ENCODE measurements at regions of chr3 and their contacts with region 1.

Region 1: DNA sequence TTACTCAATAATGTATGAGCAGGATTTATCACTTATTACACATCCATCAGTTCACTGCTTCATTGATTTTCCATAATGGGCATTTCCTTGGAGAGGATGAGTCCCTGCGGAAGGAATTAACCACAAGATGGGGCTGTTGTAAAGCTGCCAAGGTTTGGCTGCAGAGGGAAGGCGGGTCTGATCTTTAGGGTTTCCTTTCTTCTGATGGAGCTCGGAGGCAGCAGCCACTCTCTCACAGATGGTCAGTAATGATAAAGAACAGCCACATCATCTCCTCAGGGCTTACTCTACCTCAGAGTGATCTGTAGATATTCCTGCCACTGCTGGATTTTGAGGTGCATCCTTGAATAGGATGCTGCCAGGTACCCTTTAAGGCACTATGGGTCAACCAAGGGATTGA is 115.2 kb downstream of the USP13 start:
- DNase-seq: no peak
- ATAC-seq: no peak

Region 2: DNA sequence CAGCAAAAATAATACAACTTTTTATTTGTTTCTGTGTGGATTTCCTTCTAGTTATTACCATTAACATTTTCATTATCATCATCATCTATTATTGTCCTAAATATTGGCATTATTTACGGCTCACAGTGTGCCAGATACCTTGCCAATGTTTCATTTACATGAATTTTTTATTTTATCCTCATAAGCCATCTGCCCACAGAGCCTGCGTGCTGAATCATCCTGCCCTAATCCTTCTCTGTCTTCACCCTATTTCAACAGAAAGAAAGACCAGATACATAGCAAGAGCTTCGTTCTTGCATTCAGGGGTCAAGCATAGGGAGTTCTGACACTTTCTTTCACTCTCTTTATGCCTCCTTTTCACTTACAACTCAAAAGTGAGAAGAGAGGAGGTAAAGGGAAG is 1149.9 kb before region 1 on chr3:
- intact Hi-C with region 1: no loop called
- DNase-seq: no peak
- ATAC-seq: no peak

Region 3: DNA sequence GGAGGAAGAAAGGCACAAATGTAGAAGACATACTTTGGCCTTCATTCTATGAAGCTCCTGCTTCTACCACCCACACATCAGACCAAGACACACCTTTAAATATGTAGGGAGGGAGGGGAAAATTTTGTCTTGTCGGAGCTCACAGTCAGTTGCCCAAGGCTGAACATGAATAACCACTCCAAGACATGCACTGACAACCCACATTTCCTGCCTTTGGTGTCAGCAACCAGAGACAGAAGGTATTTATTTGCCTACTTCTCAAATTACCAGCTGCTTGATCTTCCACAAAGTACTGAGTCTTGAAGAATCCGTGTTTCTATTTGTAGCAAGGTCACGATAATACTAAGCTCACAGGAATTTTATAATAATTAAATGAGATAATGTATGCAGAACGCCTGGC is 1062.2 kb before region 1 on chr3:
- intact Hi-C with region 1: no loop called
- DNase-seq: no peak
- ATAC-seq: no peak

Region 4: DNA sequence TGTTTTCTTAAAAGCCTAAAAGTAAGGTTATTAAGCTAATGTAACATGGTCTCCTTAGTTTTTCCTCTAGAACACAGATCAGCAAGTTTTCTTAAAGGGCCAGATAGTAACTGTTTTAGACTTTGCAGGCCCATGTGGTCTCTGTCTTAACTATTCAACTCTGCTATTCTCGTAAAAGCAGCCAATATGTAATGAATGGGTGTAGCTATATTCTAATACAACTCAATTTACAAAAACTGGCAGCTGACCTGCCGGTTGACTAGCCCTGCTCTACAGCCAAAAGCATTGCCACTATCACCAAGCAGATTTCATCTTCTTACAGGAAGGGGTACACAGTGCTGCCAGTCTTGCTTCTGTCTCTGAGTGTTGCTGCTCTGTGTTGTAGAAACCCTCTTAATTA is 544.5 kb before region 1 on chr3:
- intact Hi-C with region 1: no loop called
- DNase-seq: no peak
- ATAC-seq: no peak

Region 5: DNA sequence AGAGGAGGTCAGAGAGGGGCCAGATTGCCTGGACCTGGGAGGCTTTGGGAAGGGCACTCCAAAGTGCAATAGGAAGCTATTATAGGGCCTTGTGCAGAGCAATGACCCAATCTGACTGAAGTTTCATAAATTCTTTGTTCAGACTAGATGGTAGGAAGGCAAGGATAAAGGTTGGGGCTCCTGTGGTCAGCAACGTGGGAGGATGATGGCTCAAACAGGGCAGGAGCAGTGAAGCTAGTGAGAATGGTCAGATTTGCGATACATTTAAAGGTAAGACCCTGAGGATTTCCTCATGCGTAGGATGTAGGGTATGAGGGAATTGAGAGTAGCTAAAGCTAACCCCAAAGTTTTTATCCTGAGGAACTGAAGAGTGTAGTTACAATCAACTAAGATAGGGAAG is 23.7 kb after region 1 on chr3:
- intact Hi-C with region 1: loop called (anchors 2 kb)
- DNase-seq: no peak
- ATAC-seq: no peak

Region 6: GRCh38 chr3:180180795-180181194 is 412.7 kb after region 1 on chr3:
- intact Hi-C with region 1: no loop called
- DNase-seq: no peak
- ATAC-seq: no peak

Measured in sciatic nerve (tissue), 2 donors.